Endothelial cell of umbilical vein (primary cell): ENCODE measurements at regions of chr17 and their contacts with region 1.

Region 1: GRCh38 chr17:2244545-2245525 is 58.8 kb downstream of the SMG6 start:
- DNase-seq: peak; percentile 97
- H3K4me3 ChIP-seq: no peak overlapping the region
- H3K27ac ChIP-seq: peak overlapping the region; percentile 86
- H3K4me1 ChIP-seq: peaks cover 22% of the 10 kb centered on the region
- H3K27me3 ChIP-seq: no peaks in the 10 kb centered on the region
- CTCF ChIP-seq: peak; percentile 91 to 95
- POLR2A ChIP-seq: no peak

Region 2: GRCh38 chr17:1561400-1562175 is 683.2 kb before region 1 on chr17:
- CTCF ChIA-PET with region 1: no interaction called
- POLR2A ChIA-PET with region 1: no interaction called
- dilution Hi-C with region 1: no loop called
- intact Hi-C with region 1: no loop called
- DNase-seq: peak; percentile 24
- H3K4me3 ChIP-seq: peak overlapping the region; percentile 45 to 83 (median 69)
- H3K27ac ChIP-seq: peak overlapping the region; percentile 46
- H3K4me1 ChIP-seq: peaks cover 38% of the 10 kb centered on the region
- H3K27me3 ChIP-seq: no peaks in the 10 kb centered on the region
- CTCF ChIP-seq: peak; percentile 15 to 40
- POLR2A ChIP-seq: no peak

Region 3: GRCh38 chr17:1908699-1909309 is 336.0 kb before region 1 on chr17:
- CTCF ChIA-PET with region 1: interaction called, 20 read pairs
- POLR2A ChIA-PET with region 1: no interaction called
- dilution Hi-C with region 1: no loop called
- intact Hi-C with region 1: loop called (anchors 1 kb)
- DNase-seq: peak; percentile 64
- H3K4me3 ChIP-seq: peak overlapping the region in 1 of 3 experiments; percentile 27
- H3K27ac ChIP-seq: no peak overlapping the region
- H3K4me1 ChIP-seq: peaks cover 5% of the 10 kb centered on the region
- H3K27me3 ChIP-seq: peaks cover 36 to 49% of the 10 kb centered on the region in 2 experiments
- CTCF ChIP-seq: peak; percentile 60 to 63
- POLR2A ChIP-seq: no peak

Region 4: GRCh38 chr17:2064980-2065785 is 179.7 kb before region 1 on chr17:
- CTCF ChIA-PET with region 1: interaction called, 455 read pairs
- POLR2A ChIA-PET with region 1: interaction called, 4 read pairs
- dilution Hi-C with region 1: no loop called
- intact Hi-C with region 1: loop called (anchors 1 kb)
- DNase-seq: peak; percentile 79
- H3K4me3 ChIP-seq: no peak overlapping the region
- H3K27ac ChIP-seq: peak overlapping the region; percentile 78
- H3K4me1 ChIP-seq: peaks cover 53% of the 10 kb centered on the region
- H3K27me3 ChIP-seq: no peaks in the 10 kb centered on the region
- CTCF ChIP-seq: peak; percentile 66 to 70
- POLR2A ChIP-seq: no peak

Region 5: DNA sequence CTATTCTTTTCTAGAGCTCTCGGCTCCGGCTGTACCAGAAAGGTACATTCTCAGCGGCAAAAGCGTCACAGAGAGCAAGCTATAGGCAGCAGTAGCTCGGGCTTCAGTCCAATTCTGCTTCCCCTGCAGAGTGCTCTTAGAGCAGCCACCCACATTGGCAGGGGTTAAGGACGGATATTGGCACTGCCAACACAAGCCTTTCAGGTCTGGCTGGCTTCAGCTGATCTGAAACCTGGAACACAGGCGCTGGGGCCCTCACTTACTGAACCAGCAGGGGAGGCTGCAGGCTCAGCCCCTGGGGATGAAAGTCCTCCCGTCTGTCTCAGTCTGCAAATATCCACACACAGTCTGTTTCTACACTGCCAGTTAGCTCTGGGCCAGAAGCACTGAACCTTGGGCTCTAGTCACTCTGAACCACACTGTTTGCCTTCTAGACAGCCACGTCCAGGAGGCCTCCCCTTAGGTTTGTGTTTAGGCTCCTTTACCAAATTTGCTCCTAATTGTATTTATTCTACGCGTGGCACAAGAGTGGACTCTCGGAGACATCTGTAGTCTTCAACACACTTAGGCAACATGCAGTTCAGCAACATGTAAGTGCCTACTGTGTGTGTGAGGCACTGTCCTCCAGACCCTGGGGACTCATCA is 149.8 kb before region 1 on chr17:
- CTCF ChIA-PET with region 1: interaction called, 93 read pairs
- POLR2A ChIA-PET with region 1: no interaction called
- dilution Hi-C with region 1: no loop called
- intact Hi-C with region 1: loop called (anchors 1 kb)
- DNase-seq: peak; percentile 78
- H3K4me3 ChIP-seq: no peak overlapping the region
- H3K27ac ChIP-seq: no peak overlapping the region
- H3K4me1 ChIP-seq: peaks cover 15% of the 10 kb centered on the region
- H3K27me3 ChIP-seq: no peaks in the 10 kb centered on the region
- CTCF ChIP-seq: peak; percentile 39 to 77
- POLR2A ChIP-seq: no peak

Region 6: GRCh38 chr17:2179615-2180295 is 65.1 kb before region 1 on chr17:
- CTCF ChIA-PET with region 1: interaction called, 14 read pairs
- POLR2A ChIA-PET with region 1: no interaction called
- dilution Hi-C with region 1: no loop called
- intact Hi-C with region 1: no loop called
- DNase-seq: peak; percentile 98
- H3K4me3 ChIP-seq: no peak overlapping the region
- H3K27ac ChIP-seq: peak overlapping the region; percentile 94
- H3K4me1 ChIP-seq: peaks cover 75% of the 10 kb centered on the region
- H3K27me3 ChIP-seq: no peaks in the 10 kb centered on the region
- CTCF ChIP-seq: no peak
- POLR2A ChIP-seq: peak; percentile 29

Region 7: DNA sequence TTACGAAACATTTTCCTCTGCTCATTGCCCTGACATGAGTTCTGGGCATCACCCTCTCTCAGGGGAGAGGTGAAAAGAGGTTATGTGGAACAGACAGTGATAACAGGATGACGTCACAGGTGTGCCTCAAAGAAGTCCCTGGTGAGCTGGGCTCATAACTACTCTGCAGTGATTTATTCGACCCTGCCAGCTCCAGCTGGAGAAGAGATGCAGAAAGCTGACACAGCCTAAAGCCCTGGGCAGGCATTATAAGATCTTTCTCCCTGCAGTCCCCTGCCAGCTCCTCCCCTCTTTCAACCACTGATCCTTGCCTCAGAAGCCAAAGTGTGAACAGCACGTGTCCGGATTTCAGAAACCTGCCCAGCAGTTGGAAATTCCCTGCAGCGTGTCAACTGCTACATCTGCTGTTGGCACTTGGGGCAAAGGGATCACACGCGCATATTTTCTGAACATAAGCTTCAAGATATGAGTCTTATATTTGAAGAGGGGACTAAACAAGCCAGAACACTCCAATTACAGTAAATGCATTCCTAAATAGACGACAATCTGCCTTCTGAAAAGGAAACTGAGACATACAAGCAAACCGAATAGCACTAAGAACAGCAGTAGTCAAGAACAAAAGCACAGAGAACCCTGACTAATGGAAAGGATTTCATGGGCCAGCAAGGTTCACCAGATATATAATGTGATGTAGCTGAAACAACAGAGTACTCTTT is 21.8 kb before region 1 on chr17:
- CTCF ChIA-PET with region 1: interaction called, 10 read pairs
- POLR2A ChIA-PET with region 1: no interaction called
- dilution Hi-C with region 1: no loop called
- intact Hi-C with region 1: no loop called
- DNase-seq: peak; percentile 66
- H3K4me3 ChIP-seq: no peak overlapping the region
- H3K27ac ChIP-seq: no peak overlapping the region
- H3K4me1 ChIP-seq: peaks cover 3% of the 10 kb centered on the region
- H3K27me3 ChIP-seq: no peaks in the 10 kb centered on the region
- CTCF ChIP-seq: no peak
- POLR2A ChIP-seq: no peak